ENCODE measurements at regions of chr3 and their contacts with region 1.

Region 1: DNA sequence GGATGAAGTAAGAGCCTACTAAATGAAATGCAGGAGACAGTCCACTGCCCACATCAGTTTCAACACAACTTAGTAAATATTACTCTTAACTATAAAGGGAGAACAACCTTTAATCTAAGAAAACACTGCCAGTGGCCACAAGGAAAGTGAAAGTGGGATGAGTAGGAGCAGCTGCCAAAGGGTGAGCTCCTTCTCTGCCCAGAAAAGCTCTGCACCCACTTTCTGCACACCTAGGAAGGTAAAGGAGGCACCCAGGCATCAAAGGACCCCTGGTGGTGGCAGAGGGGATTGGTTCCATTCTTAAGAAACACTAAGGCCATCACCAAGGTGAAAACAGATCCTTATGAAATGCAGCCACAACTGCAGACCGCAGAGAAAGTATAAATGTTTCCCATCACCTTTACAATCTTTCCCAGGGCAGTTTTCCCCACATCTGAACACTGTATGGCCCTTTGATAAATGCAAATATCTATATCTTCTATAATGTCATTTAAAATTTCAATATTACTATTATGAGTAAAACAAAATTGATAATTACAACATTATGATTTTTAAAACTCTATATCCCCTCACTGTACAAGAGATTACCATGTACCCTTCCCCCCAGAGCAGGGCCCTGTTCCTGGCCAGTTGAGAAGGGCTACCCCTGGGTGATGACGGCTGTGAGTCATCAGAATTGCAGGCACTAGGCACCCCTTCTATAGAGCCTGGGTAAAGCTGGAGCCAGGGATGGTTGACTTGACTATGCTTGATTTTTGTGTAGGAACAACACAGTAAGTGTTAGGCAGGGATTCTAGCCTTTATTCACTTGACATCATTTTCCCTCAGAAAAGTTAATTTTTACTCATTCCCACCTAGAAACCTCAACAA is 92.0 kb downstream of the SNRK start:
- DNase-seq: no peak
- ATAC-seq: peak; percentile 52
- H3K4me3 Mint-ChIP-seq: no peak overlapping the region
- H3K27ac Mint-ChIP-seq: no peak overlapping the region
- H3K4me1 Mint-ChIP-seq: no peaks in the 10 kb centered on the region
- H3K27me3 Mint-ChIP-seq: peaks cover 3% of the 10 kb centered on the region
- CTCF ChIP-seq: peak; percentile 79

Region 2: GRCh38 chr3:42780892-42781700 is 597.2 kb before region 1 on chr3:
- CTCF ChIA-PET with region 1: no interaction called
- POLR2A ChIA-PET with region 1: no interaction called
- intact Hi-C with region 1: loop called (anchors 1 kb)
- DNase-seq: no peak
- ATAC-seq: peak; percentile 79
- H3K4me3 Mint-ChIP-seq: no peak overlapping the region
- H3K27ac Mint-ChIP-seq: no peak overlapping the region
- H3K4me1 Mint-ChIP-seq: peaks cover 2% of the 10 kb centered on the region
- H3K27me3 Mint-ChIP-seq: no peaks in the 10 kb centered on the region
- CTCF ChIP-seq: peak; percentile 63

Region 3: GRCh38 chr3:42831321-42831713 is 547.0 kb before region 1 on chr3:
- CTCF ChIA-PET with region 1: interaction called, 4 read pairs
- POLR2A ChIA-PET with region 1: no interaction called
- intact Hi-C with region 1: loop called (anchors 2 kb)
- DNase-seq: peak; percentile 56
- ATAC-seq: peak; percentile 78
- H3K4me3 Mint-ChIP-seq: no peak overlapping the region
- H3K27ac Mint-ChIP-seq: no peak overlapping the region
- H3K4me1 Mint-ChIP-seq: peaks cover 4% of the 10 kb centered on the region
- H3K27me3 Mint-ChIP-seq: peaks cover 8% of the 10 kb centered on the region
- CTCF ChIP-seq: no peak

Region 4: GRCh38 chr3:42961633-42962032 is 416.7 kb before region 1 on chr3:
- CTCF ChIA-PET with region 1: interaction called, 32 read pairs
- POLR2A ChIA-PET with region 1: no interaction called
- intact Hi-C with region 1: loop called (anchors 1 kb)
- DNase-seq: no peak
- ATAC-seq: no peak
- H3K4me3 Mint-ChIP-seq: no peak overlapping the region
- H3K27ac Mint-ChIP-seq: no peak overlapping the region
- H3K4me1 Mint-ChIP-seq: no peaks in the 10 kb centered on the region
- H3K27me3 Mint-ChIP-seq: peaks cover 15% of the 10 kb centered on the region
- CTCF ChIP-seq: no peak

Region 5: DNA sequence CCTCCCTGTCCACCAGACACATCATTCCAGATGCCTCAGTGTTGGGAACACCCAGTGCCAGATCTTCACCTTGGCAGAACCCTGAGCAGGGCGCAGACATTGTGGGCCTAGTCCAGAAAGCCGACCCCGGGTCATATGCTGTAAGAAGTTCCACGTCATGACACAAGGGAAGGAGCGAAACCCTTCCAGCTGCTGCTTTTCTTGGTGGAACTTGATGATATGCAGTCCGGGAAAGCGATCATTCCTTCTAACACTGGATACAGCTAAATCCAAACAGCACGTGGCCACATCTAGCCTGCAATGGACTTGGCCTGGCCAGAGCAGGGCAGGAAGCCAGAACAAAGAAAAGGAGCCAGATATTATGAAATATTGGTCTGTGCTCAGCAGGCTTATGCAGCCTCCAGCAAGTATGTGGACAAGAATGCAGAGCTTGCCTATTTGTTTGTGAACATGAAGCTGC is 377.2 kb before region 1 on chr3:
- CTCF ChIA-PET with region 1: no interaction called
- POLR2A ChIA-PET with region 1: no interaction called
- intact Hi-C with region 1: no loop called
- DNase-seq: no peak
- ATAC-seq: no peak
- H3K4me3 Mint-ChIP-seq: no peak overlapping the region
- H3K27ac Mint-ChIP-seq: no peak overlapping the region
- H3K4me1 Mint-ChIP-seq: no peaks in the 10 kb centered on the region
- H3K27me3 Mint-ChIP-seq: peaks cover 5% of the 10 kb centered on the region
- CTCF ChIP-seq: no peak

Region 6: DNA sequence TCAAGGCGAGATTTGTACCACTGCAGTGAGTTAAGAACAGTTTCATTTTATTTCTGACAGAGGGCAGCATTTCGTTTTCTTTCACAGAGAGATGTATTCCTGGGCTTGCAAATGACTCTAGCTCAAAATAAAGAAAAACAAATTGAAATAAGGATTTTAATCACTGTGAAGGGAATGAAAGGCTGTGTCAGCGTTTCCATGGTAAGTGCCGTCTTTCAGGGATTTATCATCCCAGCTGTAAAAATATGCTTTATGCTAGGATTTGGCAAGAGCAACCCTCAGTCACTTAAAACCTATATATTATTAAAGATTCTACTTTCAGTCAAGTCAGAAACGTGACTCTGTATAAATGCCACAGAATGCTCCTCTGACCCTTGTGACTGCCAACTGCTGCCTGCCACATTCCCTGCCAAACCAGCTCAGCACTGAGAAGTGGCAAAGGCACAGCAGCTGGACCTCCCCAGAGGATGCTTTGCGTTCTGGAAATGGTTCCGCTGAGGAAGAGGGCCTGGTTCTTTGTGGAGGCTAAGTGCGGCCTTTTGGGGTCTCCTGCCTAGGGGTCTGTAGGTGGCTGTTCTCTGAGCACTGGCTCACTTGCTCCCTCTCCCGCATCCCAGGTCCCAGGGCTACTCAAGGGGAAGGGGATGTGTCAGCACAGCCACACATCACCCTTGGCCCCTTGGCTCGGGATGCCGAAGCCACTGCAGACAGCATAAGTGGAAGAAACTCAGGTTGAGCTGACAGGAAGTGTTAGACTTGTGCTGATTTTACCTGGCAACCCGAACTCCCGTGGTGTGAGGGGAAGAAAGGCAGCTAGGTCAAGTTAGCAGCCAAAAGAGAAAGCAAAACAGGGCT is 215.8 kb before region 1 on chr3:
- CTCF ChIA-PET with region 1: interaction called, 4 read pairs
- POLR2A ChIA-PET with region 1: no interaction called
- intact Hi-C with region 1: loop called (anchors 1 kb)
- DNase-seq: no peak
- ATAC-seq: no peak
- H3K4me3 Mint-ChIP-seq: no peak overlapping the region
- H3K27ac Mint-ChIP-seq: no peak overlapping the region
- H3K4me1 Mint-ChIP-seq: peaks cover 4% of the 10 kb centered on the region
- H3K27me3 Mint-ChIP-seq: peaks cover 11% of the 10 kb centered on the region
- CTCF ChIP-seq: no peak

Region 7: DNA sequence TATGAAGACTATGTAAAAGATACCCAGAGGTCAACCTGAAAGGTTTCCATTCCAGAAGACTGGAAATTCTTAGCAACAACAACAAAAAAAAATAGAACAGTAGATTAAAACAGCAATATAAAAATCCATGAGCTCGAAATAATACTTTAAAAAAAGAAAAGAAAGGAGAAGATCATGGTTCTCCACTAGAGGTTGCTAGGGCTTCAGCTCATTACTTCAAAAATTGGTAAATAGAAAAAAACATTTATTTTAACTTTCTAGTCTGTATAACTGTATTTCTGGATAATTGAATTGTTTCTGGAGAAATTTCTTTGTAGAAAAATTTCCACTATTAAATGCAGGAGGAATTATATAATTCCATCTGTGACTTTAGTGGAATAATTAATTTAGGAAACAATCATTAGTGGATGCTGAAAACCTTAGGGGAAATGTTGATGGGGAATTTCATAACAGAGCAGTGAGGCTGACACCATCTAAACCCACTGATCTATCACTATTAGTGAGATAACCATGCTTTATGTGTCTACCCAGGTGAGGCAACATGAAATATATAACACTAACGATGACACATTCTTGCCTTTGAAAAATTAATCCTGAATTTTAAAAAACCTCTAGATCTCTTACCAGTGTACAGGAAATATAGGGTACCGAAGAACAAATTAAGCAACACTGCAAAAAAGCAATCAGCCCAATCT is 154.5 kb before region 1 on chr3:
- CTCF ChIA-PET with region 1: interaction called, 8 read pairs
- POLR2A ChIA-PET with region 1: no interaction called
- intact Hi-C with region 1: loop called (anchors 1 kb)
- DNase-seq: no peak
- ATAC-seq: no peak
- H3K4me3 Mint-ChIP-seq: no peak overlapping the region
- H3K27ac Mint-ChIP-seq: no peak overlapping the region
- H3K4me1 Mint-ChIP-seq: no peaks in the 10 kb centered on the region
- H3K27me3 Mint-ChIP-seq: peaks cover 6% of the 10 kb centered on the region
- CTCF ChIP-seq: no peak